Left cardiac atrium (tissue), 4 donors: ENCODE measurements at regions of chr6 and their contacts with region 1.

Region 1: GRCh38 chr6:123316733-123317323 is 319.9 kb downstream of the TRDN start:
- DNase-seq: no peak
- ATAC-seq: no peak

Region 2: DNA sequence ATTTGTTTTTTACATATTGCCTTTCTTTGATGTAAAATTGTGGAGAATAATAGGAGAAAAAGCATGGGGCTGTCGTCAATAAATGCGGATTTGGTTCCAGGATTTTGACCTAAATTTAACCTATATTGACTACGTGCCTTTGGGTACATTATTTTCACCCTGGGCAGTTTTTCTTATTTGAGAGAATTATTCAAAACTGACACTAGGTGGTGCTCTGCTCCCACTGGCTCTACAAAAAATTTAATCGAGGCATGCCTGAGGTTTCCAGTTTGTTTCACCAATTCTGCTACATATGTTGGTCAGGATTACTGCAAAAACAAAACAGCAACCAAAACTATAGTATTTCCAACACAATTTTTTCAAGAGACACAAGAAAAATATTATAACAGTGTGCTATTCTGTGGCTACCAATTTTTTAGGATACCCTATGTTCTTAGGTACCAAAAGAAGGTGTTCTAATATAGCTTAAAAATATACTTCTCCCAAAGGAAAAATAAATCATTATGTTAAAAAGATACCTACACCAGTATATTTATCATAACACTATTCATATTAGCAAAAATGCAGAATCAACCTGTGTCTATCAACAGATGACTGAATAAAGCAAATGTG is 585.9 kb before region 1 on chr6:
- intact Hi-C with region 1: loop called in 1 of 2 experiments (anchors 10 kb)
- DNase-seq: no peak
- ATAC-seq: no peak

Region 3: DNA sequence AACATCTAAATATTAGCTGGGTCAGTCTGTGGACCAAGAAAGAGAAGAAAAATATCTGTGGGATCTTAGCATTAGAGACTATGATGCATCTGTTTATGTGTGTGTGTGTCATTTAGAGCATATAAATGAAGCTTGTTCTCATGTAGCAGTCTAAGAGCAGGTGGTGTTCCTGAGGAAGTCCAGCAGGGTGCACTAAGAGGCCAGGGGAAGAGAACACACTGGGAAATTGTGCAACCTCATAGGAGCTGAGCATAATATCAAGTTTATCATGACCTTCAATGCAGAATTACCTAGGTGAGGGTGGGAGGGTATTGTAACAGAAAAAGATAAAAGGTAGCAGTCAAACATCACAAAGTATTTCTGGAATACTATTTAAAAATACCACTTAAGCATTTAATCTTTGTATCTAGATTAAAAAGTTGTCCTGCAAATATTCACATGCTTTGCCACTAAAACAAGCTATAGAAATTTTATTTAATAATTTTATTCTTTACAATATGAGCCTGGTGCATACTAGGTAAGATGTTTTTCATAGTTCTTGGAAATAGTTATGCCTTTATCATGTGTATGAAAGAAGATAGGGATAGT is 447.3 kb before region 1 on chr6:
- intact Hi-C with region 1: loop called (anchors 5 to 10 kb)
- DNase-seq: no peak
- ATAC-seq: peak; percentile 65 to 81

Region 4: GRCh38 chr6:123380257-123380656 is 63.4 kb after region 1 on chr6:
- intact Hi-C with region 1: no loop called
- DNase-seq: no peak
- ATAC-seq: peak in 1 of 2 donors; percentile 51

Region 5: DNA sequence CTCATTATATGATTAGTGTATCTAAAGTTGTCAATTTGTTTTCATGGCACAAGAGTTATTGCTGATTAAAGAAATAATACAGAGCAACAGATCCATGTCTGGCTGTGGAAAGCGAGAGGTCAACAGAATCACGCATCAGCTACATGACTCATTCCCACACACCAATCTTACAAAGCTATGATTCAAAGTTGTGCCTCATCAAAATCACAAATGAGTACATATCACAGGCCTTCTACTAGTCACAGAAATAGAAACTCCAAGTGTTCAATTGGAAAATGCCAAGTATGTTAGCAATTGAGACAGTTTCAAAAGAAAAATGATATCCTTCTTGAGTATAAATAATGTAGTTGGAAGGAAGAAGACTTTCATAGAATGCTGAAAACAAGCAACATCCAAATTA is 429.1 kb after region 1 on chr6:
- intact Hi-C with region 1: no loop called
- DNase-seq: no peak
- ATAC-seq: peak in 1 of 2 donors; percentile 40